Mammary epithelial cell (primary cell): ENCODE measurements at regions of chr11 and their contacts with region 1.

Region 1: DNA sequence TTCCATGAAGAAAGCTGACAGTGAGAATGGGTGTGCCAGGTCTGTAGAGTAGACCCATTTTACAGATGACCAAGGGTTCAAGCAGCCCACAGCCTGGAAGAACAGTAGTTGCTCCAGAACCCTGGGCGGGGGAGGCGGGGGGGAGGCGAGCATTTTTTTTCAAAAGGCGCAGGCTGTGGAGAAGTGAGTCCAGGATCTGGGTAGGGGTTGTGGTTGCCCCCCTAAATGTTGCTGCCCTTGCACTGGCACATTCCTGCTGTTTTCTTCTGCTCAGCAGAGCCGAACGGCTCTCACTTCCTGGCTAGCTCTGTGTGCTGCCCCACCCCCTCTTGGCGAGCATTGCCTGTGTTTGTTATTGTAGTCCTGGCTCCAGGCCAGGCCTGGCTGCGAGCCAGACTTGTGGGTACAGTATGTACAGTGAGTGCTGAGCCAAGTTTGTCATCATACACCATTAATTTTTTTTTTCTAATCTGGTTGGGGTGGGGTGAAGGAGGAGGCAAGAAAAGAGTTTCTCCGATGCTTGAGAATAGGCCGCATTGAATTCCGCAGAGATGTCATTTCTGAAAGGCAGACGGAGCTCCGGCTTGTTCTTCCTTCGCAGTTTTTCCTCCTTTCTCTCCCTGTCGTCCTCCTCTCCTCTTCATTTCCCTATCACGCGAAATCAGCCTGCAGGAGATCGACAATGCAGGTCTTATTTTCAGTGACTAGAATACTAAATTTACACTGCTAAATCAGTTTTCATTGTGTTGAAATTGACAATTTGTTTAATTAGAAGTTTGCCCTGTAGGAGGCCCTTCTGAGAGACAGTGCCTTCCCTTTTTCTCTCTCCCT is 100.5 kb downstream of the ZBTB16 start:
- DNase-seq: peak; percentile 97
- H3K4me3 ChIP-seq: peak overlapping the region; percentile 10 to 33 (median 26)
- H3K27ac ChIP-seq: peak overlapping the region; percentile 89
- H3K4me1 ChIP-seq: peaks cover 58% of the 10 kb centered on the region
- H3K27me3 ChIP-seq: no peaks in the 10 kb centered on the region
- CTCF ChIP-seq: no peak

Region 2: DNA sequence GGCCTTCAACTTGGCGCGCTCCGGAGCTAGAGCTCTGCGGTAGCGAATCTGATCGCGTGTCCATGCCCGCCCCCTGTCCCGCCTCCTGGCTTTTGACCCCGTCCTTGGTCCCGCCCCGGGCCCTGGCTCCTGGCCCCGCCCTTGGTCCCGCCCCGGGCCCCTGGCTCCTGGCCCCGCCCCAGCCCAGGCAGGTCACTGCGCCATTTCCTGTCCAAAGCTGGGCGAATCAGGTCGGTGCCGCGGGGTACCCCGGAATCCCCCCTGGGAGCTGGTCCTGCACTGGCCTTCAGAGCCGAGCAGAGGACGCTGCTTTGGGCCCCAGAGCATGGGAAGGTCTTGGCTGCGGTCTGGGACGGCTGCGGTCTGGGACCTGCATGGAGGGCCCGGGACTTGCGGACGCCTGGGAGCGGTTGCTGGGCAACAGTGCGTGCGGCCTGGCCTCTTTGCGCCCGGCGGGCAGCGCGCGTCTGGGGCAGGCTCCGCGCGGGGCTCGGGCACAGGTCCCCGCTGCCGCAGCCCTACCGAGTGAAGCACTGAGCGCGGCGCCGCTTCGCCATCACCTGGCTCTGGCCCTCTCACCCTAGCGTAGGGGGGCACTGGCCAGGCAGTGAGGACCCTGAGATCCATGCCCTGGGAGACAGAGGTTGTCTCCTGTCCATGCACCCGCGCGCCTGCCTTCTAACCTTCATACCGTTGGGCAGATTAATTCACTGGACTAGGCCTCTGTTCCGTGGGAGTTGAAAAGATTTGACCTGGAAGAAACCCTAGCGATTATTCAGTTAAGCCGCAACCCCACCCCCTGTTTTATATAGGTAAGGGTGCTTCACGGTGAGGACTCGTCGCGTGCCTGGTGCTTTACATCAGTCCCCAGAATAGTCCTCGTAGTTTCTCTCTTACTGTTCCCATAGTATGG is 845.4 kb before region 1 on chr11 and contains the start of gene TTC12:
- CTCF ChIA-PET with region 1: no interaction called
- dilution Hi-C with region 1: no loop called
- in situ Hi-C with region 1: no loop called
- intact Hi-C with region 1: loop called (anchors 10 kb)
- DNase-seq: peak; percentile 94
- H3K4me3 ChIP-seq: peak within 1 kb of the TSS; percentile 68 to 95 (median 89)
- H3K27ac ChIP-seq: peak within 1 kb of the TSS; percentile 95
- H3K4me1 ChIP-seq: peaks cover 35% of the 10 kb centered on the region
- H3K27me3 ChIP-seq: no peaks in the 10 kb centered on the region
- CTCF ChIP-seq: no peak
- total RNA-seq, gene TTC12: 32.5 to 36.5 TPM

Region 3: DNA sequence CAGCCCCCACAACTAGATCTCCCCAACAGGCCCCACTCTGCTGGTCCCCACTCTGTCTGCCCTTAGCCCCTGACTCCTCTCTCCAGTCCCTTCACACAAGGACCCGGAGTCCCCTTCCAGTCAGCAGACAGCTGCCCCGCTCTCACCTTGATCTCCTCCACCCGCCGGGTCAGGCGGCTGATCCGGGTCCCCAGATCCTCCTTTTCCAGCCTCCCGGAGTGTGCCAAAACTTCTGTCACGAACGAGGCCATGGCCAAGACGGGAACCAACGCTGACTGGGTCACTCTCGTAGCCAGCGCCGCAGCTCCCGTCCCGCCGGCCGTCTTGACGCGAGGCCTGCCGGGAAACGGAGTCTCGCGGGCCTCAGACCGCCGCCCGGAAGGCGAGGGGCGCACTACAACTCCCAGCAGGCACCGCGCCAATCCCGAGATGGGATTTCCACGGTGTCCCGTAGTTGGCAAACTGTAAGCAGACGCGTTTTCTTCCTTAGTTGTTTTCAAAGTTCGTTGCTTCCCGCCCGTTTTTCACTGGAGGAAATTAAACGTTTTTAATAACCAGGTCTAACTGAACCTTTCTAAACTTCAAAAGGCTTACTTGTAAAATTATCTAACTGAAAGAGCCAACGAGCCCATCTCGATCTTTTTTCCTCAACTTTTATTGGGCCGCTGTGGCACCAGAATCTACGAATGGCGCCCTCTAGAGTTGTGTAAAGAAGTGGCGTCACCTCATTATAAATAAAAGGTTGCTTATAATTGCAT is 386.4 kb before region 1 on chr11 and contains the start of gene ZW10:
- CTCF ChIA-PET with region 1: no interaction called
- dilution Hi-C with region 1: no loop called
- in situ Hi-C with region 1: no loop called
- intact Hi-C with region 1: loop called (anchors 5 kb)
- DNase-seq: peak; percentile 96
- H3K4me3 ChIP-seq: peak within 1 kb of the TSS; percentile 66 to 87 (median 66)
- H3K27ac ChIP-seq: peak within 1 kb of the TSS; percentile 86
- H3K4me1 ChIP-seq: peaks cover 18% of the 10 kb centered on the region
- H3K27me3 ChIP-seq: no peaks in the 10 kb centered on the region
- CTCF ChIP-seq: peak; percentile 80 to 86
- total RNA-seq, gene ZW10: 18.6 to 22.5 TPM

Region 4: DNA sequence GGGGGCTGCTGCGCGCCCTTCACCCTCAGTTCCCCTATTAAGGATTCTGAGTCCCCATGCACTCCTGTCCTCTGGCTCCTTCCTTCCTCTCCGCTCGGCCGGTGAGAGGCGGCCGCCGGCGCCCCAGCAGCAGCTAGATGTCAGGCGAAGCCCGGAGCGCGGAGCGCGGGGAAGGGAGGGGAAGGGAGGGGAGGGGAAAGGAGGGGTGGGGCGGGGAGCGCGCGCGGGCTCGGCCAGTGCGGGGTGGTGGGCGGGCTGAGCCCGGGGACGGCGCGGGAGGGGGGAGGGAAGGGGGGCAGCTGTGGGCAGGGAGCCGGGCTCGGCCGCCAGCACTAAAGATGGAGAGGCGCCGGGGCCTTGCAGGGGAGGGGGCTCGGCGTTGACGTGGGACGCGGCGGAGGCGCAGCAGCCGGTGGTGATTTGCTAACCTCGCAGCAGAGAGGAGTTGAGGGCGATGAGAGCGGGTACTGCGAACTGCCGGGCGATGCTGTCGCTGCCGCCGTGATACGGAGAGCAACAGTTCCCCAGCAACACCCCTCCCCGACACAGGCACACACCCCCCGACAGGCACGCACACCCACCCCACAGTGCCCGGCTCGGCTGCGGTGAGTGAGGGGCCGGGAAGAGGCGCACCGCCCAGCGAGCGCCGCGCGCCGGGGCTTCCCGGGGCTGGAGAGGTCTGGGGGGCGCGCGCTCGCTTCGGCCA is 100.6 kb before region 1 on chr11 and contains the start of gene ZBTB16:
- CTCF ChIA-PET with region 1: no interaction called
- dilution Hi-C with region 1: no loop called
- in situ Hi-C with region 1: no loop called
- intact Hi-C with region 1: loop called (anchors 10 kb)
- DNase-seq: no peak
- H3K4me3 ChIP-seq: peak within 1 kb of the TSS; percentile 51 to 94 (median 51)
- H3K27ac ChIP-seq: no peak within 1 kb of the TSS
- H3K4me1 ChIP-seq: peaks cover 14% of the 10 kb centered on the region
- H3K27me3 ChIP-seq: peaks cover 42% of the 10 kb centered on the region
- CTCF ChIP-seq: peak in 1 of 2 donors; percentile 57
- total RNA-seq, gene ZBTB16: 1.6 to 20.2 TPM

Region 5: GRCh38 chr11:114219559-114220349 is 59.7 kb after region 1 on chr11:
- CTCF ChIA-PET with region 1: no interaction called
- dilution Hi-C with region 1: no loop called
- in situ Hi-C with region 1: no loop called
- intact Hi-C with region 1: no loop called
- DNase-seq: no peak
- H3K4me3 ChIP-seq: no peak overlapping the region
- H3K27ac ChIP-seq: no peak overlapping the region
- H3K4me1 ChIP-seq: no peaks in the 10 kb centered on the region
- H3K27me3 ChIP-seq: no peaks in the 10 kb centered on the region
- CTCF ChIP-seq: no peak

Region 6: DNA sequence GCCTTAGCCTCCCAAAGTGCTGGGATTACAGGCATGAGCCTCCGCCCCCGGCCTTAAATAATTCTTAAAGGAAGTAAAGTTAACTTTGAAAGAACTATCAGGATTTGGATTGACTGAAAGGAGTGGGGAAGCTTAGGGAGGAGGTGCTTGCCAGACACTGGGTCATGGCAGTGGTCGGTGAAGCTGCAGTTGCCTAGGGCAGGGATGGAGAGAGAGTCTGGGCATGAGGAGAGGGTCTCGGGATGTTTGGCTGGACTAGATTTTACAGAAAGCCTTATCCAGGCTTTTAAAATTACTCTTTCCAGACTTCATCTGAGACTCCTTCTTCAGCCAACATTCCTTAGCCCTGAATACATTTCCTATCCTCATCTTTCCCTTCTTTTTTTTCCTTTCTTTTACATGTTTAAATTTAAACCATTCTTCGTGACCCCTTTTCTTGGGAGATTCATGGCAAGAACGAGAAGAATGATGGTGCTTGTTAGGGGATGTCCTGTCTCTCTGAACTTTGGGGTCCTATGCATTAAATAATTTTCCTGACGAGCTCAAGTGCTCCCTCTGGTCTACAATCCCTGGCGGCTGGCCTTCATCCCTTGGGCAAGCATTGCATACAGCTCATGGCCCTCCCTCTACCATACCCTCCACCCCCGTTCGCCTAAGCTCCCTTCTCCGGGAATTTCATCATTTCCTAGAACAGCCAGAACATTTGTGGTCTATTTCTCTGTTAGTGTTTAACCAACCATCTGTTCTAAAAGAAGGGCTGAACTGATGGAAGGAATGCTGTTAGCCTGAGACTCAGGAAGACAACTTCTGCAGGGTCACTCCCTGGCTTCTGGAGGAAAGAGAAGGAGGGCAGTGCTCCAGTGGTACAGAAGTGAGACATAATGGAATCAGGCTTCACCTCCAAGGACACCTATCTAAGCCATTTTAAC is 135.9 kb after region 1 on chr11 and contains the start of gene NNMT:
- CTCF ChIA-PET with region 1: no interaction called
- dilution Hi-C with region 1: no loop called
- in situ Hi-C with region 1: no loop called
- intact Hi-C with region 1: loop called (anchors 5 kb)
- DNase-seq: peak; percentile 89
- H3K4me3 ChIP-seq: peak within 1 kb of the TSS; percentile 48 to 93 (median 73)
- H3K27ac ChIP-seq: peak within 1 kb of the TSS; percentile 98
- H3K4me1 ChIP-seq: peaks cover 51% of the 10 kb centered on the region
- H3K27me3 ChIP-seq: no peaks in the 10 kb centered on the region
- CTCF ChIP-seq: peak in 1 of 2 donors; percentile 10
- total RNA-seq, gene NNMT: 131 to 605 TPM

Region 7: GRCh38 chr11:114400217-114400914 is 240.3 kb after region 1 on chr11 and contains the starts of genes C11orf71 and RBM7:
- CTCF ChIA-PET with region 1: interaction called, 7 read pairs
- dilution Hi-C with region 1: no loop called
- in situ Hi-C with region 1: no loop called
- intact Hi-C with region 1: loop called (anchors 5 kb)
- DNase-seq: peak; percentile 99
- H3K4me3 ChIP-seq: peak within 1 kb of the TSS; percentile 77 to 91 (median 89)
- H3K27ac ChIP-seq: peak within 1 kb of the TSS; percentile 99
- H3K4me1 ChIP-seq: peaks cover 4% of the 10 kb centered on the region
- H3K27me3 ChIP-seq: no peaks in the 10 kb centered on the region
- CTCF ChIP-seq: peak in 1 of 2 donors; percentile 9
- total RNA-seq, gene C11orf71: 1.2 to 2.0 TPM
- total RNA-seq, gene RBM7: 37.5 to 42.8 TPM